ENCODE measurements at regions of chr15 and their contacts with region 1.

Region 1: DNA sequence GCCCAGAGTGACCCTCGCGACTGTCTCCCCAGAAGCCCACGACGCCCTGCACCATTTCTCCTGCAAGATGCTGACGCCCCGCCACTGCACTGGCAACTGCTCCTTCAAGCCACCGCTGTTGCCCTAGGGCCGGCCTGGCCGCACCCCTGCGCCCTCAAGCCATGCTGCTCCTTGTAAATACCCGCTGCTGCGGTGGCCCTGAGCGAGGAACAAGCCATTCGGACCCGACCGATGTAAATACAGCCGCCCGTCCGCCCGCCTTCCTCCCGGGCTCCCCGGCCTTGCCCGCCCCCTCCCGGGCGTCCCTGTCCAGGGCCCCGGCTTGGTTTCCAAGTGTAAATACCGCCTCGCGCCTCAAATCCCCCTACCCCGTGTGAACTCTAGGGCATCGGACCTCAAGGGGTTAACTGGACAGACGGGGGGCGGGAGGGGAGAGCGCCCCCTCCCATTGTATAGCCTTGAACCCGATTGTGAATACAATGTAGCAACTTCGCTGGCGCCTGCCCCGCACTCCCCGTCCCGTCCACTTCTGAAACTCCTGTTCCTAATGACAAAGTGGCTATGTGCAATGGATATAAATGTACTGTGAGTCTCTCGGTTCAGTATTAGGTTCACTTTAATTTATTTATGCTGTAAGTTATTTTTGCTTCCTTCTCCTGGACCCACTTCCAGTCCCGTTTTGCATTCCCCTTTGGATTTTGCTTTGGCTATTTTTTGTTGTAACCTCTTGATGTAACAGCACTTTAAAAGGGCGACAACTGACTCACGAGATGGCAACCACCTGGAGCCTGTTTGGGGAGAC is 5.9 kb downstream of the RNU6-1 start:
- DNase-seq: peak; percentile 40 to 42
- H3K4me3 ChIP-seq: peak overlapping the region in 1 of 3 donors; percentile 30
- H3K27ac ChIP-seq: no peak overlapping the region
- H3K4me1 ChIP-seq: peaks cover 37 to 60% of the 10 kb centered on the region in 2 donors
- H3K27me3 ChIP-seq: peaks cover 31% of the 10 kb centered on the region
- CTCF ChIP-seq: peak in 5 of 6 experiments; percentile 16 to 48 (median 27)
- POLR2A ChIP-seq: no peak

Region 2: GRCh38 chr15:67456677-67457529 is 377.0 kb before region 1 on chr15:
- intact Hi-C with region 1: loop called (anchors 2 kb)
- DNase-seq: peak; percentile 83 to 87
- H3K4me3 ChIP-seq: no peak overlapping the region
- H3K27ac ChIP-seq: no peak overlapping the region
- H3K4me1 ChIP-seq: no peaks in the 10 kb centered on the region
- H3K27me3 ChIP-seq: no peaks in the 10 kb centered on the region
- CTCF ChIP-seq: peak; percentile 76 to 90 (median 82)
- POLR2A ChIP-seq: no peak

Region 3: DNA sequence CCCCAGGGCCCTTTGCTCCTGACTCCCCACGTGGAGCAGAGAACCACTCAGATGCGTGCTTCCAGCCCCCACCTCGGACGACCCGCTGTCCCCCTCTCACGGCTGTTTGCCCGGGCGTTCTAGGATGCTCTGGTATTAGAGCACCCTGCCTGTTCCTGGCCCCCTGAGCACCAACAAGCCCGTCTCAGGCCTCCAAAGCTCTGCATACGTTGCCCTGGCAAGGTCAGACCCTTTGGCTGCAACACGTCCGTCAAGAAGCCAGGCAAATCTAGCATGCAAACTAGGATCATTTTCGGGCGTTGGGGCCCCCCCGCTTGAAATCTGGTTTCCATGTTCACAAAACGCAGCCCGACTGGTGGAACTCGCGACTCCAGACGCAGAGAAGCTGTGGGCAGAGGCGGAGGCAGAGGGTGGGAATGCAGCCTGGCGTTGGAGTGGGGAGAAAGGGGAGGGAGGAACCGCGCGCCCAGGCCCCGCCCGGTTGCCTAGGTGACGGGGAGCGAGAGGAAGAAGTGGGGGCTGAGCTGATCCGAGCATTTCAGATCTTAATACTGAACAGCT is 134.0 kb after region 1 on chr15:
- intact Hi-C with region 1: no loop called
- DNase-seq: peak; percentile 88
- H3K4me3 ChIP-seq: peak overlapping the region in 2 of 3 donors; percentile 6 to 36
- H3K27ac ChIP-seq: peak overlapping the region in 1 of 3 donors; percentile 42
- H3K4me1 ChIP-seq: peaks cover 10 to 14% of the 10 kb centered on the region in 2 donors
- H3K27me3 ChIP-seq: no peaks in the 10 kb centered on the region
- CTCF ChIP-seq: peak in 1 of 6 experiments; percentile 12
- POLR2A ChIP-seq: peak in 1 of 2 donors; percentile 68